ENCODE measurements at regions of chr10 and their contacts with region 1.

Region 1: DNA sequence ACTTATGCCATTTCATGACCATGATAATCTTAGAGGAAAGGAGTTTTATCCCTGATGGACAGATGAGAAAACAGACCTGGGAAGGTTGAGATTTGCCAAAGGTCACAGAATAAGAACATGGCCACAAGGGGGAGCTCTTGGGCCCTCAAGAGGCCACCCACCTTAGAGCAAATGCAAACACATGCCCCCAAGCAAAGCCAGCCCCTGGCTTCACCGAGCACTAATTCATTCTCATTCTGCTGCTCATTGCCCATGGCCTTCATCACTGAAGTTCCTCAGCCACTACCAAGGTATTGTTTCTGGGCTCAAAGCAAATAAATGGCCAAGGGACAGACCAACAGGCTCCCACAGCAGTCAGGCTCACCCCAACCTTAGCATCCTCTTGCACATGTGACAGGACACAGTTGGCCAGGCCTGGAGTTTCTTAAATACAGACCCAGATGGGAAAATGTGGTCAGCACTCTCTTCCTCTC is 44.2 kb downstream of the PDLIM1 start:
- DNase-seq: peak; percentile 76
- H3K4me3 ChIP-seq: no peak overlapping the region
- H3K27ac ChIP-seq: no peak overlapping the region
- H3K4me1 ChIP-seq: peaks cover 11% of the 10 kb centered on the region
- H3K27me3 ChIP-seq: no peaks in the 10 kb centered on the region
- CTCF ChIP-seq: peak; percentile 75 to 79
- POLR2A ChIP-seq: no peak

Region 2: GRCh38 chr10:94630017-94630688 is 616.5 kb before region 1 on chr10:
- CTCF ChIA-PET with region 1: interaction called, 10 read pairs
- POLR2A ChIA-PET with region 1: no interaction called
- dilution Hi-C with region 1: no loop called
- intact Hi-C with region 1: loop called (anchors 1 kb)
- DNase-seq: peak; percentile 44
- H3K4me3 ChIP-seq: no peak overlapping the region
- H3K27ac ChIP-seq: no peak overlapping the region
- H3K4me1 ChIP-seq: no peaks in the 10 kb centered on the region
- H3K27me3 ChIP-seq: peaks cover 0 to 4% of the 10 kb centered on the region in 2 experiments
- CTCF ChIP-seq: peak; percentile 18 to 39
- POLR2A ChIP-seq: no peak

Region 3: GRCh38 chr10:95077556-95077955 is 169.1 kb before region 1 on chr10:
- CTCF ChIA-PET with region 1: no interaction called
- POLR2A ChIA-PET with region 1: no interaction called
- dilution Hi-C with region 1: no loop called
- intact Hi-C with region 1: no loop called
- DNase-seq: no peak
- H3K4me3 ChIP-seq: no peak overlapping the region
- H3K27ac ChIP-seq: no peak overlapping the region
- H3K4me1 ChIP-seq: no peaks in the 10 kb centered on the region
- H3K27me3 ChIP-seq: no peaks in the 10 kb centered on the region
- CTCF ChIP-seq: no peak
- POLR2A ChIP-seq: no peak

Region 4: GRCh38 chr10:95183271-95184230 is 63.1 kb before region 1 on chr10:
- CTCF ChIA-PET with region 1: interaction called, 50 read pairs
- POLR2A ChIA-PET with region 1: no interaction called
- dilution Hi-C with region 1: no loop called
- intact Hi-C with region 1: loop called (anchors 1 kb)
- DNase-seq: peak; percentile 80
- H3K4me3 ChIP-seq: peak overlapping the region; percentile 44 to 84 (median 80)
- H3K27ac ChIP-seq: peak overlapping the region; percentile 62
- H3K4me1 ChIP-seq: peaks cover 15% of the 10 kb centered on the region
- H3K27me3 ChIP-seq: peaks cover 0 to 10% of the 10 kb centered on the region in 2 experiments
- CTCF ChIP-seq: peak; percentile 96 to 99
- POLR2A ChIP-seq: peak; percentile 70

Region 5: DNA sequence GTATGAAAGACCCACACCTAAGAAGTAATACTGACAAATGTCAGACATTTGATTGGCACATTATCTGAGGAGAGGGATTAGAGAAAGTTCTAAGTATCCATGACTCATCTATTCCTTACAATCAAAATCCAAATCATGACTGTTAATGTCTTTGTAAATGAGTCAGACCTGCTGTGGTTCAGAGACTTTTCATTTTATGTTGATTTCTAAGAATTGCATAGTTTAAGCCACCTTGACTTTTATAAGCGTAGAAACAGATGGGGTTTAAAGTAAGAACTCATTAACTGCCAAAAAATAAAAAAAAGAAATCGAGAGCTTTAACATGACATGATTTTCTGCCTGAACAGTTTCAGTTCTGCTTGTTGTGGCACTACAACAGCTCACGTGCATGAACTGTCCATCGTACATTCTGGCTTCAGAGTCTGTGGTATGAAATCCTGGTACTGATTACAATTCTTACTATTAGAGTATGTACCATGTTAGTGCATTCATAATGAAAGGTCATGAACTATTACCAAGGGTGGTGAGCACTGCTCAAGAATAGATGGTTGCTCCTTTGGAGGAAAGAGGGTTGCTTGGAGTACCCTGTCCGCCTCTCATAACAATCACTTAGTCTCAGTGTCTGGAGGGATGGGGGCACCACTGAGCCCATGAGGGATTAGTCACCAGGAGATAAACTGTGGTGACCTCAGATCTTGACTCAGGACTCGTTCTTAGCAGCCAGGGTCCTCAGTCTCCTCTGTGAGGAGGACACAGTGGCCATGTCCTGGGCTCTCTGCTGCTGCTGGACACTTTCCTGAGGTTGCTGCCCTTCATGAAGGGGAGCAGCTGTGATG is 10.3 kb before region 1 on chr10:
- CTCF ChIA-PET with region 1: interaction called, 32 read pairs
- POLR2A ChIA-PET with region 1: no interaction called
- dilution Hi-C with region 1: no loop called
- intact Hi-C with region 1: no loop called
- DNase-seq: peak; percentile 42
- H3K4me3 ChIP-seq: no peak overlapping the region
- H3K27ac ChIP-seq: peak overlapping the region; percentile 56
- H3K4me1 ChIP-seq: peaks cover 12% of the 10 kb centered on the region
- H3K27me3 ChIP-seq: no peaks in the 10 kb centered on the region
- CTCF ChIP-seq: no peak
- POLR2A ChIP-seq: no peak

Region 6: GRCh38 chr10:95290461-95291364 is 44.1 kb after region 1 on chr10 and contains the start of gene PDLIM1:
- CTCF ChIA-PET with region 1: interaction called, 16 read pairs
- POLR2A ChIA-PET with region 1: no interaction called
- dilution Hi-C with region 1: no loop called
- intact Hi-C with region 1: loop called (anchors 1 kb)
- DNase-seq: peak; percentile 58
- H3K4me3 ChIP-seq: peak within 1 kb of the TSS; percentile 61 to 91 (median 70)
- H3K27ac ChIP-seq: peak within 1 kb of the TSS; percentile 44
- H3K4me1 ChIP-seq: peaks cover 35% of the 10 kb centered on the region
- H3K27me3 ChIP-seq: no peaks in the 10 kb centered on the region
- CTCF ChIP-seq: peak in 1 of 2 donors; percentile 30
- POLR2A ChIP-seq: peak; percentile 57
- total RNA-seq, gene PDLIM1: 70.4 and 122 TPM in 2 replicates

Region 7: DNA sequence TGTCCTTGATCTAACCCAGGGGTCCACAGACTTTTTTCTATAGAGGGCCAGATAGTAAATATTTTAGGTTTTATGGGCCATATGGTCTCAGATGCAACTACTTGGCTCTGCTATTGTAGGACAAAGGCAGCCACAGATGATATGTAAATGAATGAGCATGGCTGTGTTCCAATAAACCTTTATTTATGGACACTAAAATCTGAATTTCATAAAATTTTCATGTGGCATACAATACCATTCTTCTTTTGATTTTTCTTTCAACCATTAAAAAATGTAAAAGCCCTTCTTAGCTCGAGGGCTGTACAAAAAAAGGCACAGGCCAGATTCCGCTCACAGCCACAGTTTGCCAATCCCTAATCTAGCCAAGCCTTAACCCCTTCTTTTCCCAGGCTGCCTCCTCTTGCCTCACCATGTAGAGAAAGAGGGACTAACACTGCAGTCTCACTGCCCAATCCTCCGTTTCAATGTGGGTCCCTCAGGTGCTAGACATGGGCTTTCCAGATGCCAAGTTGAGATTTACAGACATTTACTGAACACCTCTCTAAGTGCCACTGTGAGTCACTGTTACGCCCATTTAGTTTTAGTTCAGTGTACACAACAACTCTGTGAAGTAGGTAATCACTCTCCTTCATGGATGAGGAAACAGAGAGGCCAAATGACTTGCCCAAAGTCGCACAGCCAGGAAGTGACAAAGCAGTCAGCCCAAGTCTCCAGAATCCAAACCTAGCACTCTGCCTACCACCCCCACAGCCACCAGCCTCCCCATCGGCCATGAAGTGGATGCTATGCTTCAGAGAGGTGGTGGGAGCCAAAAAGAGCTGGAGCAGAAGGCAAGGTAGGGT is 176.8 kb after region 1 on chr10:
- CTCF ChIA-PET with region 1: no interaction called
- POLR2A ChIA-PET with region 1: no interaction called
- dilution Hi-C with region 1: no loop called
- intact Hi-C with region 1: no loop called
- DNase-seq: no peak
- H3K4me3 ChIP-seq: no peak overlapping the region
- H3K27ac ChIP-seq: no peak overlapping the region
- H3K4me1 ChIP-seq: no peaks in the 10 kb centered on the region
- H3K27me3 ChIP-seq: peaks cover 0 to 3% of the 10 kb centered on the region in 2 experiments
- CTCF ChIP-seq: no peak
- POLR2A ChIP-seq: no peak

Region 8: DNA sequence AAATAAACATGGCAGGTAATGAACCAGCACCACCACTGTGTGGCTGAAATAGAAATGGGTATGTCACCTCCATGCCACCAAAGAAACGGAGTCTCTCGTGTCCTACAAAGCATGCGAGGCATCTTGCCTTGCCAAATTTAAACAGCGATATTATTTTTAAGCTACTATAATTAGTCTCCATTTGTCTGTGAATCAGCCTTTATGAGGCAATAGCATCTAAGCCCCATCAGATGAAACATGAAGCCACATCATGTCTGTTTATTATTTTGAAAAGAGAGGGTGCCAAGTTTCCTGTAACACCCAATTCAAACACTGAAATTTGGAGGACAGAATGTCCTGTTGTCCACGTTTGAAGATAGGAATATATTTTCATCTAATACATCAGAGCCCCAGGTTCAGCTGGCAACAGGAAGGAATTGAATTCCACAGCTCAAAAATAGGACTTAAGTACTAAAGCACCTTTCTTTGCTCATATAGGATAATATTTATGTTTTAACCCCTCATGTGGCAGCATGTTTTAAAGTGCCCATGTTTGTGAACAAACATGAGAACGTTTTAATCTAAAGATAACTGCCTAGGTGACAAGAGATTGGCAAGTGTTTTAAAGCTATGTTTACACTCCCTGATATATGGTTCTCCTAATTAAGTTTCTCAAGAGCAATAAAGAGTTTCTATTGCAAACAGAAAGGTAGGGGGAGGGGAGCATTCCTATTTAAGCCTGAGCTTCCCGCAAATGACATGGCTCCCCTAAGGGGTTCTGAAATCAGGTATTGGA is 227.8 kb after region 1 on chr10:
- CTCF ChIA-PET with region 1: no interaction called
- POLR2A ChIA-PET with region 1: no interaction called
- dilution Hi-C with region 1: no loop called
- intact Hi-C with region 1: no loop called
- DNase-seq: peak; percentile 33
- H3K4me3 ChIP-seq: no peak overlapping the region
- H3K27ac ChIP-seq: no peak overlapping the region
- H3K4me1 ChIP-seq: peaks cover 21% of the 10 kb centered on the region
- H3K27me3 ChIP-seq: no peaks in the 10 kb centered on the region
- CTCF ChIP-seq: no peak
- POLR2A ChIP-seq: no peak

Region 9: DNA sequence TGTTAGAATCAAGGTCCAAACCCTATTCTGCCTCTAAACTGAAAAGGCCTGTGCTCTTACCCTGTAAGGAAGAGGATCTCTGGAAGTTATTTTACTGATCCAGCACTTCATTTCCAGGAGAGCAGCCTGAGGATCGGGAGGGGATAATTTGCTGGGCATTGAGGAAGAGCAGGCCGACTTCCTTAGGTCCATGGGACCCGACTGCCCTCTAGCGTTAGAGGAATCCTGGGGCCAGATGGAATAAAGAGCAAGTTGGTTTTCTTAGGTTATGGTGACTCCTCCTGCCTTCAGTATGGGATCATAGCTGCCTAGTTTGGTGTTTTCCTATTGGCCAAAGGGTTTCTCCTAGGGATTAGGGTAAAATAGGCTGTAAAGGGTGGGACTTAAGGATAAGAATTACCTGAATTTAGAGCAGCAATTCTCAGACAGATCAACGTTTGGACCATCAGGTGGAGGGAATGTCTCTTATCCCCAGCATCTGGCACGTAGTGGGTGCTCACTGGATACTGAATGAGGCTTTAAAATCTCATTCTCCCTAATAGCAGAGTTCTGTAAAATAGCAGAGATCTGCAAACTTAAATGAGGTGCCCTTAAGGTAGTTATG is 354.6 kb after region 1 on chr10:
- CTCF ChIA-PET with region 1: interaction called, 11 read pairs
- POLR2A ChIA-PET with region 1: no interaction called
- dilution Hi-C with region 1: no loop called
- intact Hi-C with region 1: loop called (anchors 1 kb)
- DNase-seq: peak; percentile 89
- H3K4me3 ChIP-seq: no peak overlapping the region
- H3K27ac ChIP-seq: no peak overlapping the region
- H3K4me1 ChIP-seq: no peaks in the 10 kb centered on the region
- H3K27me3 ChIP-seq: peaks cover 0 to 7% of the 10 kb centered on the region in 2 experiments
- CTCF ChIP-seq: peak; percentile 90 to 96
- POLR2A ChIP-seq: no peak